ENCODE measurements at regions of chr18 and their contacts with region 1.

Region 1: GRCh38 chr18:13909141-13909940 is 6.0 kb downstream of the MC2R start:
- DNase-seq: no peak
- ATAC-seq: no peak
- H3K4me3 ChIP-seq: no peak overlapping the region
- H3K27ac ChIP-seq: no peak overlapping the region
- H3K4me1 ChIP-seq: no peaks in the 10 kb centered on the region
- H3K27me3 ChIP-seq: no peaks in the 10 kb centered on the region
- CTCF ChIP-seq: no peak

Region 2: GRCh38 chr18:13868501-13869271 is 40.7 kb before region 1 on chr18:
- intact Hi-C with region 1: no loop called
- DNase-seq: no peak
- ATAC-seq: no peak
- H3K4me3 ChIP-seq: no peak overlapping the region
- H3K27ac ChIP-seq: no peak overlapping the region
- H3K4me1 ChIP-seq: no peaks in the 10 kb centered on the region
- H3K27me3 ChIP-seq: peaks cover 2 to 48% (median 6%) of the 10 kb centered on the region in 3 donors
- CTCF ChIP-seq: no peak

Region 3: DNA sequence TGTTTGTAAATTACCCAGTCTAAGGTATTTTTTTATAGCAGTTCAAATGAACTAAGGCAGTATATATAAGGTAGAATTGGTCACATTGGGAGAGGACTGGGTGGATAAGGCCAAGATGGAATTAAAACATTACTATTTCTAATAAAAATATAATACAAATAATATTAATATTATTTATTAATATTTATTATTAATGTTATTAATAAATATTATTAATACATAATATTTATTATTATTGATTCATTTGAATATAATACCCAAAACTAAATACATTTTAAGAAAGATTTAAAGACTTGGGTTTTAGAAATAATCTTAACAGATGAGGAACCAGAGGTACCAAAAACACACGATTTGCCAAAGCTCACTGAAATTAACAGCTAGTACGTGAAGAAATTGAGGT is 36.5 kb after region 1 on chr18:
- intact Hi-C with region 1: loop called in 1 of 2 experiments (anchors 10 kb)
- DNase-seq: no peak
- ATAC-seq: no peak
- H3K4me3 ChIP-seq: no peak overlapping the region
- H3K27ac ChIP-seq: no peak overlapping the region
- H3K4me1 ChIP-seq: no peaks in the 10 kb centered on the region
- H3K27me3 ChIP-seq: no peaks in the 10 kb centered on the region
- CTCF ChIP-seq: no peak

Region 4: DNA sequence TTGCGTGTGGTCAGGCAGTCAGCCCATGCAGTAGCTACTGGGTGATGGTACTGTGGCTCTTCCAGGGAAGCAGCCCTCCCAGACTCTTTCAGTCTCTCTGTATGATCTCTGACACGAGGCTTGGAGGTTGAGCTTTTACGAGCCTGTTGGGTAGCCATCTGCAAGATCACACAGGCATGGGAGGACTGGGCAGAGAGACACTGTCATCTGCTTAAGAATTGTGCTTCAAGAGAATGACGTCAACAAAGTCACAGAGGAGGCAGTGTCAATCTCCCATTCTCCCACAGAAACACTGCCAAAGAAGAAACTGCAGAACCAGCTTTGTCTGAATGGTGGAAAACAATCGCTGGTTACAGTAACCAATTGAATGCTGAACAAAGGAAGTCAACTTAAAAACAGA is 84.4 kb after region 1 on chr18:
- intact Hi-C with region 1: no loop called
- DNase-seq: no peak
- ATAC-seq: no peak
- H3K4me3 ChIP-seq: no peak overlapping the region
- H3K27ac ChIP-seq: no peak overlapping the region
- H3K4me1 ChIP-seq: no peaks in the 10 kb centered on the region
- H3K27me3 ChIP-seq: no peaks in the 10 kb centered on the region
- CTCF ChIP-seq: no peak